Cardiac septum (tissue), 1 donor: ENCODE measurements at regions of chr9 and their contacts with region 1.

Region 1: GRCh38 chr9:77848897-77849296 is 182.7 kb downstream of the GNAQ start:
- DNase-seq: no peak

Region 2: DNA sequence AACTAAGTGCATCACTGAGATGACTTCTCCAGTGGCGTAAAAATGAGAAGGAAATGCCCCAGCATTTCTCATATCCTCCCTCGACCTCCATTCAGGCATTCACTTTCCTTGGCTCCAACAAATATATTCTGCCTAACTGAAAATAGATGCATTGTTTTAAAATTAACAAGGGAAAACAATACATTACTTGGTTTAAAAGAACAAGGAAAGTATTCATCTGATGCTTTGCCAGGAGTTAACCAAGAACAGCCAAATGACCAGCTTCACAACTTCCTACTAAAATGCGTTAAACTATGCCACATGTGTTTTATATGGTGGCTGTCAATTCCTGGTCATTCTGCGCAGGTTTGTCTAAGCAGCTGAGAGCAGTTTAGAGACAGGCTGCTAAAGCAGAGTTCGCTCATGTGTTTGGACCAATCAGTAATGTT is 61.3 kb after region 1 on chr9:
- intact Hi-C with region 1: loop called (anchors 2 kb)
- DNase-seq: no peak

Region 3: GRCh38 chr9:77977210-77977611 is 128.3 kb after region 1 on chr9:
- intact Hi-C with region 1: loop called (anchors 5 kb)
- DNase-seq: no peak